Mammary epithelial cell (primary cell): ENCODE measurements at regions of chr11 and their contacts with region 1.

Region 1: GRCh38 chr11:86818466-86819192 is 18.3 kb downstream of the PRSS23 start:
- DNase-seq: peak; percentile 50
- H3K4me3 ChIP-seq: no peak overlapping the region
- H3K27ac ChIP-seq: no peak overlapping the region
- H3K4me1 ChIP-seq: peaks cover 39% of the 10 kb centered on the region
- H3K27me3 ChIP-seq: no peaks in the 10 kb centered on the region
- CTCF ChIP-seq: peak; percentile 59 to 60

Region 2: DNA sequence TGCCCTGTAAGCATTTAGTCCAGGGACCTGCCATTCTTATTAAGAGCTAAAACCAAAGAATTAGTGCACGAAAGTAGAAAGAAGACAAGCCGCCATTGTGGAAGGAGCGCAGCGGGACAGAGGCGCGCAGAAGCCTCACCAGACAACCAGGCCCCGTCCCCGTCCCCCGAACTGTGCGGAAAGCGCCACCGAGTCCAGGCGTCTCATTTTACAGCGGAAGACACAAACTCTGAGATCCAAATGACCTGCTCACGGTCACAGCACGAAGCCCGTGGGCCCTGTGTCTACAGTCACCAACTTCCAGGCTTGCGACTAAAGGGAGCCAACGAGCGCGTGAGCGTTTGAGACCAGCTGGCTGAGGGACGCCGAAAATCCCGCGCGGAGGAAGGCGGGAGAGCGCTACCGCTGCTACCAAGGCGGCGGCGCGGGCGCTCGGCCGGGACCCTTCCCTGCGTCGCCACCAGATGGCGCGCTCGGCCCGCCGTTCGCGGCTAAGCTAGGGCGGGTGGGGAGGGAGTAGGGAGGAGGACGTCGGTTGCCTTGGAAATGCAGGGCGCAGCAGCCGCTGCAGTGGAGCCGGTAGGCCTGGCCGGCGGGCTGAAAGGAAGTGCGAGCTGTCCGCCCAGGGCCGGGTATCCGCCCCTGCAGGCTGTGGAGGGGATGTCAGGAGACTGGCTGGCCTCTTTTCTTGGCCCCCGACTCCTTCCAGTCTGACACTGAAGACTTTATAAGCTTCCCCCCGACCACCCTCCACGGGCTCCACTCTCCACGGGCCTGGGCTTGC is 963.9 kb before region 1 on chr11:
- CTCF ChIA-PET with region 1: no interaction called
- dilution Hi-C with region 1: no loop called
- in situ Hi-C with region 1: no loop called
- intact Hi-C with region 1: loop called (anchors 10 kb)
- DNase-seq: peak; percentile 89
- H3K4me3 ChIP-seq: peak overlapping the region; percentile 24 to 61 (median 49)
- H3K27ac ChIP-seq: peak overlapping the region; percentile 8
- H3K4me1 ChIP-seq: peaks cover 10% of the 10 kb centered on the region
- H3K27me3 ChIP-seq: no peaks in the 10 kb centered on the region
- CTCF ChIP-seq: peak; percentile 24 to 80

Region 3: DNA sequence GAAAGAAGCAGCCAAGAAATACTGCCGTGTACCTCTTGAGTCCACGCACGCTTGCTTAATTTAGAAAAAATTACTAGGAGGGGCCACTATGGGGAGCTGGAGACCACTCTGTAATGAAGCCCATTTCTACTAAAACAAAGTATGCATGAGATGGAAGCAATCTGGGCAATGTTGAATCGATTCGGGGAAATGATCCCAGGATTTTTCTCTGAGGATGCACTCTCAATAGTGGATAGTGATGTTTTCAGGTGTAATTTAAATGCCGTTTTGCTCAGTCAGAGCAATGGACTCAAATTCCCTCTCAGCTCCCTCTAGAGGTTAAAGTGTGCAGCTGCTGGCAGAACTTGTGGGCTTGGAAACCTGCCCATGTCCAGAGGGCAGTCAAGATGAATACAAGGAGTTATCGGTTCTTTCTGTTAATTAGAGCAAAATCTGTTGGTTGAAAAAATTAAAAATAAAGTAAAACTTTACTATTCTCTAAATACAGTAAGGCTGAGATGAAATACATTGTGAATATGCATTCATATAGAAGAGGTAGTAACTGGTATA is 210.3 kb before region 1 on chr11:
- CTCF ChIA-PET with region 1: interaction called, 6 read pairs
- dilution Hi-C with region 1: no loop called
- in situ Hi-C with region 1: loop called in 1 of 2 experiments (anchors 10 kb)
- intact Hi-C with region 1: loop called (anchors 1 kb)
- DNase-seq: peak; percentile 72
- H3K4me3 ChIP-seq: no peak overlapping the region
- H3K27ac ChIP-seq: no peak overlapping the region
- H3K4me1 ChIP-seq: peaks cover 22% of the 10 kb centered on the region
- H3K27me3 ChIP-seq: no peaks in the 10 kb centered on the region
- CTCF ChIP-seq: peak; percentile 89 to 91

Region 4: GRCh38 chr11:86632499-86633269 is 185.9 kb before region 1 on chr11:
- CTCF ChIA-PET with region 1: no interaction called
- dilution Hi-C with region 1: no loop called
- in situ Hi-C with region 1: loop called in 1 of 2 experiments (anchors 25 kb)
- intact Hi-C with region 1: no loop called
- DNase-seq: peak; percentile 93
- H3K4me3 ChIP-seq: no peak overlapping the region
- H3K27ac ChIP-seq: peak overlapping the region; percentile 60
- H3K4me1 ChIP-seq: peaks cover 18% of the 10 kb centered on the region
- H3K27me3 ChIP-seq: no peaks in the 10 kb centered on the region
- CTCF ChIP-seq: peak in 1 of 2 donors; percentile 53

Region 5: GRCh38 chr11:86848861-86849260 is 30.2 kb after region 1 on chr11:
- CTCF ChIA-PET with region 1: no interaction called
- dilution Hi-C with region 1: no loop called
- in situ Hi-C with region 1: no loop called
- intact Hi-C with region 1: no loop called
- DNase-seq: no peak
- H3K4me3 ChIP-seq: no peak overlapping the region
- H3K27ac ChIP-seq: no peak overlapping the region
- H3K4me1 ChIP-seq: no peaks in the 10 kb centered on the region
- H3K27me3 ChIP-seq: no peaks in the 10 kb centered on the region
- CTCF ChIP-seq: no peak

Region 6: DNA sequence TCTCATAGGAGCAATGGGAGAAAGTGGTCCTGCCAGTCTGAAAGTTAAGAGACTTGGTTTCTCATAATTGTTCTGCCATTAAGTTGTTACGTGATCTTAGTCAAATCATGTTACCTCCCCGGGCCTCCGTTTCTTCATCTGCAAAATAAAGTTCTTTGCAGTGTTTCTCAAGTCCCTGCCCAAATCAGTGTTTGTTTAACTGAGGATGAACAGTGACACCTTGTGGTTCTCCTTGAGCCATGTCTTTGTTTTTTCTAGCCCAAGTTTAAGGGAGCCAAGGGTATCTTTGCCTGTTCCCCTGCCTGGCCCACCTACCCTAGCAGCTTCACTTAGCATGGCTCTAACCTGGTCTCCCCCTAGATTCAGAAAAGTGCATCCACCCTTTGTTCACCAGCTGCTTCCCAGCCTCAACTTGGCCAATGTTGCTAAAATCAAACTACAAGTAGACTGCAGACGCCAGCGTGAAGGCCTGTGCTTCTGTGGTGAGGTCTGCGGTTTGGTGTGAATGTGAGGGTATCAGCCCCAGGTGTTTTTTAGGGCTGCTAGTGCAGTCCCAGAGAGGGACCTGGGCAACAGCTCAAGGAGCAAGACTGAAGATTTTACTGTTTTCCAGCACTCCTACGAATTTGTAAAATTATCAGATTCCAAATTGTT is 101.1 kb after region 1 on chr11:
- CTCF ChIA-PET with region 1: no interaction called
- dilution Hi-C with region 1: no loop called
- in situ Hi-C with region 1: no loop called
- intact Hi-C with region 1: loop called (anchors 5 kb)
- DNase-seq: peak; percentile 48
- H3K4me3 ChIP-seq: no peak overlapping the region
- H3K27ac ChIP-seq: no peak overlapping the region
- H3K4me1 ChIP-seq: peaks cover 14% of the 10 kb centered on the region
- H3K27me3 ChIP-seq: no peaks in the 10 kb centered on the region
- CTCF ChIP-seq: peak; percentile 55 to 72